Psoas muscle (tissue), 8 donors: ENCODE measurements at regions of chr20 and their contacts with region 1.

Region 1: GRCh38 chr20:50958615-50959542 is at the start of gene MOCS3:
- DNase-seq: peak; percentile 80 to 92
- ATAC-seq: peak; percentile 83 to 91 (median 88)
- H3K4me3 ChIP-seq: peak within 1 kb of the TSS; percentile 86
- H3K27ac ChIP-seq: peak within 1 kb of the TSS; percentile 89
- H3K4me1 ChIP-seq: peaks cover 47% of the 10 kb centered on the region
- H3K27me3 ChIP-seq: no peaks in the 10 kb centered on the region
- CTCF ChIP-seq: no peak
- total RNA-seq, gene MOCS3: 2.9 to 4.2 (median 3.7) TPM

Region 2: DNA sequence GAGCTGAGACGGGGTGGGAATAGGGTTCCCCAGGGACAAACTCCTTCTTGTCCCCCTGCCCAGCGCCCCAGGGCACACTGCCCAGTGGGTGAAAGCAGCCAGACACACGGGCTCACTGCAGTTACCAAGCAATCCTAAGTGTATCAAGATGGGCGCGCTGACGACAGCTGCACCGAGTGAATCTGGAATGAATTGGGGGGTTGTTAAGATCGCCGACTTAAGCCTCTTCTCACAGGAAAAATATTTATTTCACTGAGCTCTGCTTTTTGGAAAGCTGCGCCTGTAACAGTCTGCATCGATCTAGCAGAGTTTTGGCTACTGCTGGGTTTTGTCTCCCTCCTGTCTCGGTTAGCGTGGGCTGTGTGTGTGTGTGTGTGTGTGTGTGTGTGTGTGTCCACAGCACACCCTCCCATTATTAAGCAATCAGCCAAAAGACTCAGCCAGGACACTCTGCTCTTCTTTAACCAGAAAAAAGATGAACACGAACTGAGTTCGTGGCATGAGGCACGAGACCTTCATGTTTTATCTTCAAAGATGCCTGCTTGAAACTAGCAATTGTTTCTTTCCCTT is 303.5 kb before region 1 on chr20:
- intact Hi-C with region 1: no loop called
- DNase-seq: peak; percentile 64 to 79
- ATAC-seq: peak; percentile 39 to 65 (median 60)
- H3K4me3 ChIP-seq: no peak overlapping the region
- H3K27ac ChIP-seq: peak overlapping the region; percentile 58
- H3K4me1 ChIP-seq: peaks cover 13% of the 10 kb centered on the region
- H3K27me3 ChIP-seq: no peaks in the 10 kb centered on the region
- CTCF ChIP-seq: no peak

Region 3: DNA sequence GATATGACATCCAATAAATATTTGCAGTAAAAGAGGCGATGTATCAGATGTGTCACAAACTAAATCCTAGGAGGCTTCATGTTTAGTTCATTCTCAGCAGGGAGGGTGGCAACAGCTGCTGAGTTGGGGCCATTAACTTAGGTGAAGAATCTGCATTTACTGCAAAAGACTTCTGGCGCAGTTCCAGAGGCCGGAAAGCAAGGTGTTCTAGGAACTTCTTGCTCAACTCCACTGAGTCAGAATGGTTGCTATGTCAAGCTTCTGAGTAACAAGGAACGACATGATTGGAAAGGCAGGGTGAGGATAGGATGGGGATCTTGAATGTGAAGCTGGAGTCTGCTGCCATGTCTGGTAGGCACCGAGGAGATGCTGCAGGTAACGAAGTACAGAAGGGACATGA is 39.3 kb before region 1 on chr20:
- intact Hi-C with region 1: loop called in 1 of 2 experiments (anchors 5 kb)
- DNase-seq: peak; percentile 61 to 74
- ATAC-seq: peak in 3 of 4 donors; percentile 70 to 81 (median 75)
- H3K4me3 ChIP-seq: no peak overlapping the region
- H3K27ac ChIP-seq: no peak overlapping the region
- H3K4me1 ChIP-seq: peaks cover 82% of the 10 kb centered on the region
- H3K27me3 ChIP-seq: no peaks in the 10 kb centered on the region
- CTCF ChIP-seq: no peak

Region 4: DNA sequence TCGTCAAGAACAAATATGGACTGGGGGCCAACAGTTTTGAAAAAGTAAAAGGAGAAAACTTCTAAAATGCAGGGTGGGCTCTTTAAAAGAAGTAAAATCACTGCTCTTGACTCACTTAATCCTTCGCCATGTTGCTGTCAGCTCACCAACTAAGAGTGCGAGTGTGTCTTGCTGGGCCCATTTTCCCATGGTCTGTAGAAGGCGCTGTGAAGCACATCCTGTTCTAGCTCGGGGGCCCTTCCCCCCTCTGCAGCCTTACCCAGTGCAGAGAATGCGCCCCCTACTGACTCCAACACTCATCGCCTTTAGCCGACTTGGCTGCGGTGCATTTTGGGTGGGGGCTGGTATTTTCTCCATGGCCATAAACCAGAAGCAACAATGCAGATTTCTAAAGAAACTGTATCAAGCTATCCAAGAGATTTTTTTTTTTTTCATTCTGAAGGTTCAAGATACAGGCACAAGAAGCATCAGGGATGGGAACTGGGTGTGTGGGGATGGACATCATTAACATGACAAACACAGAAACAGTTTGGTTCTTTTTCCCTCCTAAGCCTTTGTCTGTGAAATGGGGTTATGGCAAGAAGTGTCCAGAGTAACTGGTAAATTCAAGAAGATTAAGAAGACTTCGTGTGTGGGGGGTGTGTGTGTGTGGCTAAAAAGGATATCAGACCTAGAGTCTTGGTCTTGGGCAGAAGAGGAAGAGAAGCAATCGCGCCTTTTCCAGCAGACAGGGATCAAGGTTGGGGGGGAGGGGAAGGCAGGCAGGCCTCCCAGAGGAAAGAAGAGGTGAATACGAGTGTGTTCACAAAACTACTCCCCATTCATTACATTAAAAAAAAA is 29.4 kb before region 1 on chr20:
- intact Hi-C with region 1: loop called (anchors 2 kb)
- DNase-seq: peak; percentile 86 to 90
- ATAC-seq: peak; percentile 44 to 79 (median 76)
- H3K4me3 ChIP-seq: peak overlapping the region; percentile 82
- H3K27ac ChIP-seq: peak overlapping the region; percentile 77
- H3K4me1 ChIP-seq: peaks cover 52% of the 10 kb centered on the region
- H3K27me3 ChIP-seq: no peaks in the 10 kb centered on the region
- CTCF ChIP-seq: peak; percentile 70